Motor neuron (in vitro differentiated cells): ENCODE measurements at regions of chr6 and their contacts with region 1.

Region 1: GRCh38 chr6:139375232-139376016 is 976 bp upstream of the CITED2 start:
- ATAC-seq: peak; percentile 59 to 75 (median 68)
- H3K4me3 ChIP-seq: peak overlapping the region; percentile 91 to 100 (median 98)
- H3K27ac ChIP-seq: peak overlapping the region; percentile 90 to 95
- H3K4me1 ChIP-seq: peaks cover 12 to 17% of the 10 kb centered on the region in 2 donors

Region 2: DNA sequence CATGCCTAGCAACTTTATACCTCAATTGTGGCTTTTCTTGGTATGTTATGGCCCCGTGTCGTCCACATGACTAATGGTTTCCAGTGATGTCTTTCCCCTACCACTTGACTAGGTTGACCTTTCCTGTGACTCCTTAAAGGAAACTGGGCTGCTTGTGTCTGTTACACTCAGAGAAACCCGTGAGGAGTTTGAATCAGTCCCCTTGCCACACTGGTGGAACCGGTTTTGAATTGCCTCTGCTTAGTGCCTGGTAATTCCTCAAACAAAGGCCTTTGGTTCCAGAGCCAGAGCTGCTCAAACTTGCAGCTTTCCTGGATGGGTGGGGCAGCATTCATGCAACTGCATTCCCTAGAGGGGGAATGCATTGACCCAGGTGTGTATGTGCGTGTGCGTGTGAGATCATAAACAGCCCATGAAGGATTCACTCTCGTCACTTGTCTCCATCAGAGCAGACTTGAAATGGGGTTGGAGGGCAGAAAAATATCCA is 557.6 kb before region 1 on chr6:
- in situ Hi-C with region 1: loop called in 6 of 9 experiments (anchors 25 kb)
- ATAC-seq: peak in 3 of 8 experiments; percentile 16 to 29 (median 26)
- H3K4me3 ChIP-seq: no peak overlapping the region
- H3K27ac ChIP-seq: no peak overlapping the region
- H3K4me1 ChIP-seq: peaks cover 5 to 11% of the 10 kb centered on the region in 2 donors

Region 3: GRCh38 chr6:138953451-138953850 is 422.0 kb before region 1 on chr6:
- in situ Hi-C with region 1: no loop called
- ATAC-seq: peak in 2 of 8 experiments; percentile 31 to 61
- H3K4me3 ChIP-seq: no peak overlapping the region
- H3K27ac ChIP-seq: no peak overlapping the region
- H3K4me1 ChIP-seq: peaks cover 0 to 2% of the 10 kb centered on the region in 2 donors

Region 4: DNA sequence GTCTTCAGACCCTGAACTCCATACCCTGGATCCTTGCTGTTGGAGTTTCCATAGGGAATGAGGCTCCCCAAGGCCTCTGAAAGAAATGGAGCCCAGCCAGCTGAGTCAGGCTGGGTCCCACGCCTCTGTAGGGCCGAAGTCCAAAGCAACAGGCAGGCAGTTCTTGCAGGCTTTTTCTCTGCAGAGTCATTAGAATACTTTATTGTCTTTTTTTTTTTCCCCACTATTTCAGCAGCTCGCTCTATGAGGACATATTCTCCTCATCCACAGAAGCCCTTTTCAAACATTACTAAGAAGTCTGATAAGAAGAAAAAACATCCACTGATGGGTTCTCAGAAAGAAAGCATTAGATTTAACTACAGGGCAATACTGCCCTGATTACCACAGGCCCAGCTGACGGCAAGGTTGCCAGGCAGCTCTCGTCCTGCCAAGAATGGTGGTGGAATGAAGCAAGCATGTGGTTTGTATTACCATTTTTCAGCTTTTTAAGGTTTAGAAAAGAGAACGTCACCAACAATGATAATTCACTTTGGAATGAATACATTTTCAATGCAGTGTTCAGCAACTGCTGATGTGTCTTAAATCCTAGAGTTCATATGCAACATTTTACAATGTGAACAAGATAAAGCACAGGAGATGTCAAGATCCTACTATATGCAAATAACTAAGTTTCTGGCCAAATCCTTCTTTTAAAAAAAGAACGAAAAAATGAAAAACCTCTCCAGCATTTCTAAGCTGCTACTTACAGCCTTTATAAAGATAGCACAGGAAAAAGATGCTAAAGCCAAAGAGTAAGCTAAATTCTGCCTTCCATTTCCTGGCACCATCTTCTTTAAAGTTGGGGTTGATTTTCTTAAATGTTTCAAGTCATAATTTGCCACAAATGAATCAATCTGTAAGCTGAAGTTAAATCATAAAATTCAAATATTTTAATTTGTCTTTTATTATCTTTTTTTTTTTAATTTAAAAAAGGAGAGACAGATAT is 222.6 kb after region 1 on chr6:
- in situ Hi-C with region 1: loop called in 1 of 9 experiments (anchors 25 kb)
- ATAC-seq: peak; percentile 58 to 97 (median 92)
- H3K4me3 ChIP-seq: no peak overlapping the region
- H3K27ac ChIP-seq: no peak overlapping the region
- H3K4me1 ChIP-seq: peaks cover 7 to 8% of the 10 kb centered on the region in 2 donors

Region 5: DNA sequence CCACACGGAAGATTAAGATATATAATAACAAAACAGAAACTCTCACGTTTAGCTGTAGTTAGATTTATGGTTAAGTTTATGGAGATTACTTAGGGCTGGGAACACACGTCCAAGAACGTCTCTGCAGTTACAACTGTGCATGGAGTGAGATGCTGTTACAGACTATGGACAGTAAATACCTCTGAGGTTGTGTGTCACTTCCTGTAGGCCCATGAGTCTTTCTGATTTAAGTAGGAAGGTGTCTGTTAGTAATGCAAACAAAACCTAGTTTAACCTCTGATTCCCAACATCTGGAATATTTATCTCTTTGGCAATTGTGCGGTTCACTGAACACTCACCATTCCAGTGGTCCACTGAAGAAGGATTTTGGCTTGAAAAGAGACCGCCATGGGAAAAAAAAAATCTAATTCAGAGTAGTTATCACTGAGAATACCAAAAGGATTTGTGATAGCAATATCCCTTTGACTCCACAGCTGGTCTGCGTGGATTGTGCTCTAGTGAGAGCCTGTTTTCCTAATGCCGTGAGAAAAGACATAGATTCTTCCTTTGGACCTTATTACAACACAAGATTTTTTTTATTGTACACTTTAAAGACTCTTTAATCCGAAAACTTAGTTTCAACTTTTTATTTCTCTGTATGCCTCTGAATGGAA is 477.2 kb after region 1 on chr6:
- in situ Hi-C with region 1: loop called in 1 of 9 experiments (anchors 25 kb)
- ATAC-seq: peak in 2 of 8 experiments; percentile 26 to 30
- H3K4me3 ChIP-seq: no peak overlapping the region
- H3K27ac ChIP-seq: no peak overlapping the region
- H3K4me1 ChIP-seq: peaks cover 0 to 25% of the 10 kb centered on the region in 2 donors

Region 6: DNA sequence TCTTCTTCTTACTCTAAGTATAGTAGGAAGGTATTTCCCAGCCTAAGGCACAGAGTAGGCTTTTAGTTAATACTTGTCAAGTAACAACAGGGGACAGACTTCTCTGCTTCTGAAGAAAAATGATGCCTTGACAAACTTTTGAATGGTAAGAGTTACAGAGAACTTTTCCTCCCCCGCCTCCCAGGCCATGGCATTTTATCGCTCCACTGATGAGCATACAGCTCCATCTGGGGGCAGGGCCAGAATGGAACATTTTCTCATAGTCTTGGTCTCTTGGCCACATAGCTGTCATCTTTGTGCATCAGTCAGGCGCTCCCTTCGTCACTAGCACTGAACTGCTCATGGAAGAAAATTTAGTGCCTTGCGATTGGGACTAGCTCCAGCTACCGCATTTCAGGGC is 1065.8 kb after region 1 on chr6:
- in situ Hi-C with region 1: loop called in 1 of 9 experiments (anchors 25 kb)
- ATAC-seq: peak; percentile 34 to 86 (median 81)
- H3K4me3 ChIP-seq: no peak overlapping the region
- H3K27ac ChIP-seq: no peak overlapping the region
- H3K4me1 ChIP-seq: peaks cover 3 to 16% of the 10 kb centered on the region in 2 donors